ENCODE measurements at regions of chr12 and their contacts with region 1.

Region 1: DNA sequence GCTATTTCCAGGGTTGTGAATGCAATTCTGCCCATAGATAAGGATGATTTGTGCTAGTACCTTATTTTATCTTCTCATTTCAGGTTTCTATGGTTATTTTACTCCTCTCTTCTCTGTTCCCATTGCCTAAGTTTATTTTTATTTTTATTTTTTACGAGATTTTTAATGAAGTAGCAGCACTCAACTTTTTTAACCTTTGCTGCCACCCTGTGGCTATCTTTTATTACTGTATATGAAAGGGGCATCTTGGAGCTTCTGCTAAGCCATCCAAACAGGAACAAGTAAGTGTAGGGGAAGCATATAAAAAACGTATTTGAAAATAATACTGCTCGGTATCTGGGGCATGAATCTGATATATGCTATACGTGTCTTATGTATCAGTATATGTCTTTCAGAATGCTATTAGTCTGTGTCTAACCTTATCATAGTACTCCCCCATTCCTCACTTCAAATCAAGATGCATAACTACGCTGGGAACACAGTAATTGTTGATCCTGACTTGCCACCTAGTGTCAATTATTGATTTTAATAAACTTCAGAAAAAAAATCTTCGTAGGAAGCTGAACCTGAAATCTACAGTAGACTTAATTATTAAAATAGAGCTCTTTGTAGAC is 60.3 kb downstream of the KLRG1 start:
- DNase-seq: peak; percentile 52
- ATAC-seq: peak; percentile 86
- H3K4me3 ChIP-seq: no peak overlapping the region
- H3K27ac ChIP-seq: no peak overlapping the region
- H3K4me1 ChIP-seq: no peaks in the 10 kb centered on the region
- H3K27me3 ChIP-seq: peaks cover 10% of the 10 kb centered on the region
- CTCF ChIP-seq: peak; percentile 61
- POLR2A ChIP-seq: no peak
- RAD21 ChIP-seq: peak; percentile 60

Region 2: GRCh38 chr12:8544295-8544694 is 505.3 kb before region 1 on chr12:
- CTCF ChIA-PET with region 1: interaction called, 12 read pairs
- POLR2A ChIA-PET with region 1: no interaction called
- dilution Hi-C with region 1: no loop called
- in situ Hi-C with region 1: no loop called
- intact Hi-C with region 1: loop called (anchors 1 kb)
- DNase-seq: peak; percentile 59
- ATAC-seq: peak; percentile 86
- H3K4me3 ChIP-seq: no peak overlapping the region
- H3K27ac ChIP-seq: no peak overlapping the region
- H3K4me1 ChIP-seq: no peaks in the 10 kb centered on the region
- H3K27me3 ChIP-seq: no peaks in the 10 kb centered on the region
- CTCF ChIP-seq: peak; percentile 81
- POLR2A ChIP-seq: no peak
- RAD21 ChIP-seq: peak; percentile 54

Region 3: DNA sequence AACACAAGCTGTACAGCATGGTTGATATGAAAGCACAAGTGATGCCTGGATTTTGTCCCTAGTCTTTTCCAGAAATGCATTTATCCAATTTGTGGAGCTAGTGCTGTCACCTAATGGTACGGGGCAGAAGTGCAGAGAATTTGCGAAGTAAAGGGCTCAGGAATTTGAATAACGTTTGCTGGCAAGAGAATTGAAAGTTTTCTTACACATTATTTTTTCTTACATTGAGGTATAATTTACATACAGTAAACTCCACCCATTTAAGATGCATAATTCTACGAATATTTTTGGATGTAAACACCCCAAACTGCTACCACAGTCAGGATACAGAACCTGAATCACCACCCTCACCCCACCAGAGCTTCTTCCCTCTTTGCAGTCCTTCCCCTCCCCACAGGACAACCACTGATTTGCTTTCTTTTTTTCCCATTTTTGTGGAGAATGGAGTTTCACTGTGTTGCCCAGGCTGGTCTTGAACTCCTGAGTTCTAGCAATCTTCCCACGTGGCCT is 440.5 kb before region 1 on chr12:
- CTCF ChIA-PET with region 1: no interaction called
- POLR2A ChIA-PET with region 1: interaction called, 12 read pairs
- dilution Hi-C with region 1: no loop called
- in situ Hi-C with region 1: no loop called
- intact Hi-C with region 1: no loop called
- DNase-seq: peak; percentile 47
- ATAC-seq: peak; percentile 82
- H3K4me3 ChIP-seq: no peak overlapping the region
- H3K27ac ChIP-seq: no peak overlapping the region
- H3K4me1 ChIP-seq: no peaks in the 10 kb centered on the region
- H3K27me3 ChIP-seq: no peaks in the 10 kb centered on the region
- CTCF ChIP-seq: peak; percentile 58
- POLR2A ChIP-seq: no peak
- RAD21 ChIP-seq: peak; percentile 35; the same call in 1 of the 2 replicates

Region 4: GRCh38 chr12:8662593-8662992 is 387.0 kb before region 1 on chr12 and contains the start of gene MFAP5:
- CTCF ChIA-PET with region 1: interaction called, 14 read pairs
- POLR2A ChIA-PET with region 1: no interaction called
- dilution Hi-C with region 1: no loop called
- in situ Hi-C with region 1: loop called (anchors 10 kb)
- intact Hi-C with region 1: no loop called
- DNase-seq: peak; percentile 25
- ATAC-seq: no peak
- H3K4me3 ChIP-seq: no peak within 1 kb of the TSS
- H3K27ac ChIP-seq: no peak within 1 kb of the TSS
- H3K4me1 ChIP-seq: no peaks in the 10 kb centered on the region
- H3K27me3 ChIP-seq: peaks cover 12% of the 10 kb centered on the region
- CTCF ChIP-seq: no peak
- POLR2A ChIP-seq: no peak
- RAD21 ChIP-seq: no peak
- total RNA-seq, gene MFAP5: 0.56 and 0.90 TPM in 2 replicates

Region 5: GRCh38 chr12:9198012-9198411 is 148.4 kb after region 1 on chr12:
- CTCF ChIA-PET with region 1: no interaction called
- POLR2A ChIA-PET with region 1: no interaction called
- dilution Hi-C with region 1: no loop called
- in situ Hi-C with region 1: no loop called
- intact Hi-C with region 1: no loop called
- DNase-seq: no peak
- ATAC-seq: no peak
- H3K4me3 ChIP-seq: no peak overlapping the region
- H3K27ac ChIP-seq: no peak overlapping the region
- H3K4me1 ChIP-seq: no peaks in the 10 kb centered on the region
- H3K27me3 ChIP-seq: no peaks in the 10 kb centered on the region
- CTCF ChIP-seq: no peak
- POLR2A ChIP-seq: no peak
- RAD21 ChIP-seq: no peak

Measured in IMR-90 (cell line).